Pancreas (tissue), 10 donors: ENCODE measurements at regions of chr2 and their contacts with region 1.

Region 1: DNA sequence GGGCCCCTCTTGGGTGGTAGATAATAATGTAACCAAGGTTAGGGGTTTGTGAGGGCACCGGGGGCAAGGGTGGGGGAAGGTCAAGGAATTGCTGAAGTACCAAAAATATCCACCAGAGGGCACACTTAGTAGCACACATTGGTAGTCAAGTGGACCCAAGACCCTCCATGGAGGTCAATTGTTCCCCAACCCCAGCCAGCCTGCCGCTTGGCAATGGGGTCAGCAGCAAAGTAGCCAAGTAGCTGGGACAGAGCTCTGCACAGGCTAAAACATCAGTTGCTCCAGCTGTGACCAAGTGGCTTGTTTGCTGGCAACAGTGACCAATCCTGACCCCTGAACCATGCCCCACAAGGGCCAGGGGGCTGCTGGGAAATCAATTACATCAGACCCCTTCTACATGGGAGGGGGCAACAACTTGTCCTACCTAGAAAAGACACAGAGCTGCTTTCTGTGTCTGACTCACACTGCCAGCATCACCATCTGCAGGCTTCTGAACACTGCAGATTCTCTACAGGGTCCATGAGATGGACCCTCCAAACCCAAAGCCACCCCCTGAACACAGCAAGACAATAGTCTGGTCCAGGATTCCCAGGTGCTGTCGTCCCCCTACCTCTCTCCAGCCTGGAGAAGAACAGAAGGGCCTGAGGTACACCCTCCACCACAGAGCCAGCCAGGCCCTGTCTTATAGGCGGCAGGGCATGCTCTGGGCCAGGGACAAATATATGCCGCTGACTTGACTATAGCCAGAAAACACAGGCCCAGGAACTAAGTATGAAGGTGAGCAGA is 76.0 kb downstream of the EMX1 start:
- DNase-seq: peak in 1 of 6 donors; percentile 42
- ATAC-seq: peak in 3 of 4 donors; percentile 53 to 70 (median 63)
- H3K4me3 ChIP-seq: no peak overlapping the region
- H3K27ac ChIP-seq: no peak overlapping the region
- H3K4me1 ChIP-seq: no peaks in the 10 kb centered on the region
- H3K27me3 ChIP-seq: no peaks in the 10 kb centered on the region
- CTCF ChIP-seq: peak; percentile 69 to 85 (median 82)

Region 2: GRCh38 chr2:73176881-73177644 is 183.7 kb after region 1 on chr2:
- intact Hi-C with region 1: loop called in 2 of 3 experiments (anchors 5 to 10 kb)
- DNase-seq: peak; percentile 79 to 97 (median 88)
- ATAC-seq: peak; percentile 91 to 97 (median 94)
- H3K4me3 ChIP-seq: peak overlapping the region; percentile 18 to 61 (median 48)
- H3K27ac ChIP-seq: peak overlapping the region in 2 of 4 donors; percentile 55 to 58
- H3K4me1 ChIP-seq: peaks cover 0 to 16% (median 4%) of the 10 kb centered on the region in 3 donors
- H3K27me3 ChIP-seq: no peaks in the 10 kb centered on the region
- CTCF ChIP-seq: peak; percentile 89 to 97 (median 96)